ENCODE measurements at regions of chr3 and their contacts with region 1.

Region 1: GRCh38 chr3:40505599-40506462 is at the start of gene ZNF620:
- DNase-seq: peak; percentile 82
- H3K4me3 Mint-ChIP-seq: peak within 1 kb of the TSS; percentile 94
- H3K27ac Mint-ChIP-seq: peak within 1 kb of the TSS; percentile 82
- H3K4me1 Mint-ChIP-seq: peaks cover 17% of the 10 kb centered on the region
- H3K27me3 Mint-ChIP-seq: peaks cover 2% of the 10 kb centered on the region
- total RNA-seq, gene ZNF620: 4.9 and 5.6 TPM in 2 replicates

Region 2: GRCh38 chr3:40427045-40427669 is 78.7 kb before region 1 on chr3:
- intact Hi-C with region 1: no loop called
- DNase-seq: no peak
- H3K4me3 Mint-ChIP-seq: no peak overlapping the region
- H3K27ac Mint-ChIP-seq: no peak overlapping the region
- H3K4me1 Mint-ChIP-seq: no peaks in the 10 kb centered on the region
- H3K27me3 Mint-ChIP-seq: peaks cover 1% of the 10 kb centered on the region

Region 3: DNA sequence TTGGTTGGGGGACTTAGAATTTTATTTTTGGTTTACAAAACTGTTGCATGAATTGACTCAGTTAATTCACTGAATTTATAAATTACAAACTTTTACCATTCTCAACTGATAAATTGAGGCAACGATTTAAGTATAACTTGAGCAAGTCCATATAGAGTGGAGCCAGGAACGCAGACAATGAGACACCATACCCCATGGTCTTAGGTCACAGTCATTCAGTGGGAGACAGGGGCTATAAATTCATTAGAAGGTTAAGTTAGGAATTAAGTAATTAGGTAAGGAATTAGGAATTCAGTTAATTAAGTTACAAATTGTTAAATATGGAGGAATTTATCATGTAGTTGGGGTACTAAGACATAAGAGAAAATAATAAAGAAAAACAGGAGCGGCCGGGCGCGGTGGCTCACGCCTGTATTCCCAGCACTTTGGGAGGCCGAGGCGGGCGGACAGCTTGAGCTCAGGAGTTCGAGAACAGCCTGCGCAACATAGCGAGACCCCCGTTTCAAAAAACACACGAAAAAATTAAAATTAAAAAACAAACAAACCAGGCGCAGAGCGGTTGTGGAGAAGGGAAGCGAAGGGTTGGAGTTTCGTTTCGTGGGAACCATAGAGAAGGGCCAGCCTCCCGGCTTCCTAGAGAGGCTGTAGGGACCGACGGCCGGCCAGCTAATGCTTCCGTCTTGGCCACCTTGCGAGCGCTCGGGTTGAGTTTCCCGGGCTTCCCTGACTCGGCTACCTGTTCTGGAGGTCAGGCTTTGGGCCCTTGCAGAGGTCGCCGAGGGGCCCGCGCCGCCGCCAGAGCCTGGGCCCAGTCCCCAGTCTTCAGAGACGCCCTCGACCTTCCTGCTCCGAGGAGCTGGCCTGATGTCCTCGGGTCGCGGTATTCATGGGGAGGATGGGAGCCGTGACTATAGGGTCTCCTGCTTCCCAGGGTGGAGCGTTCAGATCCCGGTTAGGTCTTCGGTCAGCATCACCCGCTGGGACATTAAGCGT is 29.1 kb before region 1 on chr3 and contains the start of gene ZNF619:
- intact Hi-C with region 1: loop called (anchors 2 kb)
- DNase-seq: peak; percentile 89
- H3K4me3 Mint-ChIP-seq: peak within 1 kb of the TSS; percentile 89
- H3K27ac Mint-ChIP-seq: peak within 1 kb of the TSS; percentile 83
- H3K4me1 Mint-ChIP-seq: peaks cover 20% of the 10 kb centered on the region
- H3K27me3 Mint-ChIP-seq: peaks cover 5% of the 10 kb centered on the region
- total RNA-seq, gene ZNF619: 6.1 and 8.4 TPM in 2 replicates